K562 (cell line): ENCODE measurements at regions of chr1 and their contacts with region 1.

Region 1: GRCh38 chr1:65209005-65209885 is 61.2 kb downstream of the AK4 start:
- DNase-seq: peak; percentile 72 to 78 (median 75)
- ATAC-seq: peak; percentile 92
- H3K4me3 ChIP-seq: no peak overlapping the region
- H3K27ac ChIP-seq: no peak overlapping the region; the same call in 2 of the 3 replicates
- H3K4me1 ChIP-seq: peaks cover 5 to 8% of the 10 kb centered on the region in 2 experiments; a peak in 3 of 5 replicates
- H3K27me3 ChIP-seq: no peaks in the 10 kb centered on the region
- CTCF ChIP-seq: peak; percentile 69 to 82 (median 77)
- EP300 ChIP-seq: no peak
- POLR2A ChIP-seq: no peak
- RAD21 ChIP-seq: peak; percentile 71 to 84

Region 2: GRCh38 chr1:65059930-65060538 is 149.2 kb before region 1 on chr1:
- CTCF ChIA-PET with region 1: interaction called, 9 read pairs
- POLR2A ChIA-PET with region 1: no interaction called
- in situ Hi-C with region 1: loop called (anchors 5 kb)
- intact Hi-C with region 1: loop called (anchors 1 kb)
- DNase-seq: peak; percentile 31 to 43 (median 37)
- ATAC-seq: 0 out of 3 replicates have a peak, but pooled peaks have one; percentile 30
- H3K4me3 ChIP-seq: no peak overlapping the region
- H3K27ac ChIP-seq: no peak overlapping the region
- H3K4me1 ChIP-seq: peaks cover 0 to 6% of the 10 kb centered on the region in 2 experiments; a peak in 2 of 5 replicates
- H3K27me3 ChIP-seq: no peaks in the 10 kb centered on the region
- CTCF ChIP-seq: peak; percentile 44 to 65 (median 50); a peak in 4 of 6 replicates
- EP300 ChIP-seq: no peak
- POLR2A ChIP-seq: no peak
- RAD21 ChIP-seq: peak; percentile 69 to 73

Region 3: DNA sequence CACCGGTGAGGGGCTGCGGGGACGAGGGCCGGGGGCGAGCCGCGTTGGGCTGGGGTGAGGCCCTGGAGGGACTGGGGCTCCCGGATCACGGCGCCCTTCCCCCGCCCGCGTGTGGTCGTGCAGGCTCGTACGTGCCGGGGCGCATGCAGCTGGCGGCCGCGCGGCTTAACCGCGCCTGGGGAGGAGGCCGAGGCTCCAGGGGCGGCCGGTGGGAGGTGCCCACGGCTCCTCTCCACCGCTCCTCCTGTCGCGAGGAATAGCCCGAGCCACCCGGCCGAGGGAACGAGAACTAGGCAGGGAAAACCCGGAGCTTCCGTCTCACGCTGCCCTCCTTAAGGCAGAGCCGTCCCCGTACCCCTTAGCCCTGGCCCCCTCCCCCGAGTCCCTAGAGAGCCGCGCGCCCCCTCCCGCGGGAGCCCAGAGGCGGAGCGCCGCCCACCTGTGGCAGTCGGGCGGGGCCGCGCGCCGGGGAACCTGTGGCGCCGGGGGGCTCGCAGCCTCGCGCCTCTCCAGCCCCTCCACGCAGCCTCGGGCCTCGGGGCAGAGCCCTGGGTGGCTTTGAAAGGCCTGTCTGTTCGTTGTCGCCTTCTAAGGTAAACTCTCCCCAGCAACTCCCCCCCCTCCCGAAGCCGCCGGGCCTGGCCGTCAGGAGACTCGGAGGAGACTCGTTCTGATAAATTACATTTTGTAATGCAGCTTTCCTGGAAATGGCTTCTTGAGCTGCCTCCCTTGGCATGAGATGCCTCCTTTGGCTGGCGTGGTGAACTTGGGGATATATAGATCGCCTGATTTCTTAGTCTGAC is 60.5 kb before region 1 on chr1:
- CTCF ChIA-PET with region 1: no interaction called
- POLR2A ChIA-PET with region 1: interaction called, 3 read pairs
- in situ Hi-C with region 1: no loop called
- intact Hi-C with region 1: loop called (anchors 5 kb)
- DNase-seq: peak; percentile 51 to 69 (median 60)
- ATAC-seq: peak; percentile 74
- H3K4me3 ChIP-seq: peak overlapping the region; percentile 64
- H3K27ac ChIP-seq: peak overlapping the region; percentile 61
- H3K4me1 ChIP-seq: peaks cover 10 to 26% of the 10 kb centered on the region in 2 experiments
- H3K27me3 ChIP-seq: no peaks in the 10 kb centered on the region
- CTCF ChIP-seq: no peak
- EP300 ChIP-seq: no peak
- POLR2A ChIP-seq: no peak
- RAD21 ChIP-seq: no peak